Dendritic cell treated with granulocyte-macrophage colony-stimulating factor and Interleukin-4, amounts not matched to agents 40 ng/mL and 50 ng/mL, for 4 days (primary cell): ENCODE measurements at regions of chr10 and their contacts with region 1.

Region 1: DNA sequence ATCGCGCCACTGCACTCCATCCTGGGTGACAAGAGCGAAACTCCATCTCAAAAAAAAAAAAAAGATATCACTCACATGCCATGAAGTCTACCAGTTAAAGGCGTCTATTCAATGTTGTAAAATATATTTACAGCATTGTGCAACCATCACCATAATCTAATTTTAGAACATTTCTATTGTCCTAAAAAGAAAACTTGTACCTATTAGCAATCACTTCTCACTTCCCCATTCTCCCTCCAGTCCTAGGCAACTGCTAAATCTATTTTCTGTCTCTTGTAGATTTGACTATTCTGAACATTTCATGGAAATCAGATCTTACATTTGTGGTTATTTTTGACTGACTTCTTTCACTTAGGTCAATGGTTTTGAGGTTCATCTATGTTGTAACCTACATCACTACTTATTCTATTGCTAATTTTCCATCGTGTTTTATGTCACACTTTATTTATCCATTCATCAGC is 25.2 kb upstream of the OTUD1 start:
- H3K4me3 Mint-ChIP-seq: peak overlapping the region; percentile 10
- H3K27ac Mint-ChIP-seq: peak overlapping the region; percentile 66
- H3K4me1 Mint-ChIP-seq: peaks cover 21% of the 10 kb centered on the region
- H3K27me3 Mint-ChIP-seq: no peaks in the 10 kb centered on the region

Region 2: GRCh38 chr10:23376229-23376655 is 37.4 kb before region 1 on chr10:
- intact Hi-C with region 1: loop called (anchors 2 kb)
- H3K4me3 Mint-ChIP-seq: no peak overlapping the region
- H3K27ac Mint-ChIP-seq: peak overlapping the region; percentile 84
- H3K4me1 Mint-ChIP-seq: peaks cover 45% of the 10 kb centered on the region
- H3K27me3 Mint-ChIP-seq: peaks cover 7% of the 10 kb centered on the region